ENCODE measurements at regions of chr5 and their contacts with region 1.

Region 1: DNA sequence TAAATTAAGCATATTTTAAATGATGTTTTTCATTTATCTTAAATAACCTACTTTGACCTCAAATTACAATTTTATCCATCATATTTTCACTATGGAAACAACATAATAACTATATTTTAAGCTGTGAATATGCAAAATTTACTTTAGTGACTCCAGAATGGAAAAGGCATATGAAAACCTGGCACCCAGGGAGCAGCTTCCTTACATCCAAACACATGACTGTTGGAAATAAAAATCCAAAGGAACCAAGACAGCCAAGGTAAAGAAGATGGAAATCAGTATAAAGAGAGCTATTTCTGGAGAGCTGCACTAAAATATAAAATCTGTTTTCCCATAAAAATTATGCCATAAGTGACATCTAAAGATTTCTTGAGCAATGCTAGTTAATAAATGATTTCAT is 140.3 kb upstream of the FTMT start:
- DNase-seq: no peak

Region 2: GRCh38 chr5:120164986-120165385 is 1546.4 kb before region 1 on chr5:
- intact Hi-C with region 1: no loop called
- DNase-seq: no peak

Region 3: DNA sequence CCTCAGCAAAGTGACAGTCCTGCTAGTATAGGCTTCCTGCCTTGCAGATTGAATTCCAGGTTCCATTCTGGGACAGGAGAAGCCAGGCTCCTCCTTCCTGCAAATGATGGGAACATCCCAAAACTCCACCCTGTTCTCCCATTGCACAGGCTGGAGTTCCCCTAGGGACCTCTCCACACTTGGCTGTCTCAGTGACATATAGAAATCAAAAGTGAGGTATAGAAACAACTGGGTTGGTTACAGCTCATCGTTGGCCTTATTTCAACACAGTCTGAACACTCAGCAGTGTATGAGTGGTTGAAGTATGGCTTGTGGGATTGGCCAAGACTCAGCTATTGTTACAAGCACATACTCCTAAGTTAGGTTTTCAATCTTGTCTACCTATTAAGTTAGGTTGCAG is 17.6 kb before region 1 on chr5:
- intact Hi-C with region 1: loop called in 1 of 2 experiments (anchors 2 kb)
- DNase-seq: no peak

Region 4: DNA sequence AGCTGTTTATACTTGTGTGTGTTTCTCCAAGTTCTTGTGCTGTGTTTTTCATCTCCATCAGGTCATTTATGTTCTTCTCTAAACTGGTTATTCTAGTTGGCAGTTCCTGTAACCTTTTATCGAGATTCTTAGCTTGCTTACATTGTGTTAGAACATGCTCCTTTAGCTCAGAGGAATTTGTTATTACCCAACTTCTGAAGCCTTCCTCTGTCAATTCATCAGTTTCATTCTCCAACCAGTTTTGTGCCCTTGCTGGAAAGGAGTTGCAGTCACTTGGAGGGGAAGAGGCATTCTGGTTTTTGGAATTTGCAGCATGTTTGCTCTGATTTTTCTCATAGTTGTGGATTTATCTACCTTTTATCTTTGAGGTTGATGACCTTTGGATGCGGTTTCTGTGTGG is 14.1 kb after region 1 on chr5:
- intact Hi-C with region 1: no loop called
- DNase-seq: no peak

Measured in posterior vena cava (tissue), 2 donors.